A673 (cell line): ENCODE measurements at regions of chr18 and their contacts with region 1.

Region 1: GRCh38 chr18:43396266-43396665 is 119.0 kb upstream of the SYT4 start:
- DNase-seq: peak; percentile 45
- H3K4me3 ChIP-seq: no peak overlapping the region
- H3K27ac ChIP-seq: no peak overlapping the region
- H3K4me1 ChIP-seq: no peaks in the 10 kb centered on the region
- H3K27me3 ChIP-seq: no peaks in the 10 kb centered on the region
- CTCF ChIP-seq: peak; percentile 67

Region 2: DNA sequence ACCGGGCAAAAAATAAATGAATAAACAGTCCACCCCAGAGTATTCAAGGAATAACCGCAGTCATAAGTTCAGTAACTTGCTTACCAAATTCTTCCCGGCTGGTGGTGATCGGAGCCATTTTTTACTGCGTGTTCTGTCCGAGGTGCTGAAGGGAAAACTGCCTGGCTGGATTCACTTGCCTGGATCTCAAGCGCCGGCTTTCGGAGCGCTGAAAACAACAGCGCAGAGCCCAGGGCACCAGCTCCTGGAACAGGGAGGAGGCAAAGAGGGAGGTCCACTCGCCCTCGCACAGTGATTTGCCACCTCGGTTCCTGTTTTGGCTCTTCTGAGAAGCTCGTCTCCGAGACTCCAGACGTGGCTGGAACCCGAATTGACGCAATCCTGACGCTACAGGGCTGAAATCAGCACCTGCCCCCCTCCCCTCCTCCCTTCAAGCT is 119.1 kb before region 1 on chr18 and contains the start of gene SYT4:
- CTCF ChIA-PET with region 1: interaction called, 3 read pairs
- POLR2A ChIA-PET with region 1: no interaction called
- intact Hi-C with region 1: loop called (anchors 5 kb)
- DNase-seq: peak; percentile 72
- H3K4me3 ChIP-seq: no peak within 1 kb of the TSS
- H3K27ac ChIP-seq: no peak within 1 kb of the TSS
- H3K4me1 ChIP-seq: no peaks in the 10 kb centered on the region
- H3K27me3 ChIP-seq: no peaks in the 10 kb centered on the region
- CTCF ChIP-seq: no peak
- total RNA-seq, gene SYT4: 2.3 TPM in 2 replicates